ENCODE measurements at regions of chr16 and their contacts with region 1.

Region 1: GRCh38 chr16:89860747-89861304 is 12.6 kb upstream of the TCF25 start:
- DNase-seq: peak; percentile 85
- ATAC-seq: peak; percentile 94
- H3K4me3 Mint-ChIP-seq: no peak overlapping the region
- H3K27ac Mint-ChIP-seq: no peak overlapping the region
- H3K4me1 Mint-ChIP-seq: peaks cover 31% of the 10 kb centered on the region
- H3K27me3 Mint-ChIP-seq: no peaks in the 10 kb centered on the region
- CTCF ChIP-seq: peak; percentile 99

Region 2: DNA sequence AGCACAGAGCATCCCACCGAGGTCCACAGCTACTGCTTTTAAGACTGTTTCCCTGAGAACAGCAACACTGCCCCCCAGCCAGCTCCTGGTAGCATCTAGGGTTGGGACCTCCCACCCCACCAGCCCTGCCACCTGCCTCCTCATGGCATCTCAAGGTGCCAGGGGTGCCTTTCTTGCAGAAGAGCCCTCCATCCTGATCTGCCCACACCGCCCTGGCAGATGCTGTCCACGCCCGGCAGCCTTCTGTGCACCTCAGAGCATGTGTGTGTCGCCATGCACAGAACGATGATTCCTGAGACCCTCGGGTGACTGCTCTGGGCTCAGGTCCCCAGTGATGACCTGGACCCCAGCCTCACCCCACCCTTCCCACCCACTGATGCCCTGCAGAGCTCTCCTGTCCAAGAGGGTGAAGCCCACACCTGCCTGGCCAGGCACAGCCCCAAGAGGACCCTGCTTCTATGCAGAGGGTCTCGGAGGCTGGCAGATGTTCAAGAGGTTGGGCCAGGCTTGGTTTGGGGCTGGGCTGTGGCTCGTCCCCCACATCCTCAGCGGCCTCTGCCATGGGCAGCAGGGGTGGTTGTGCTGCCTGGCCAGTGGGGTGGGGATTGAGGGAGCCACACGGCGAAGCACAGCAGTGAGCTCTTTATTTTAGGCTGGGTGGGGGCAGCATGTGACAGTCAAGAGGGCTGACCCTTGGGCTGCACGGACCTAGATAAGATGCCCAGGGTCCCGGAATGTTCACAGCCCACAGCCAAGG is 154.1 kb before region 1 on chr16:
- CTCF ChIA-PET with region 1: interaction called, 46 read pairs
- POLR2A ChIA-PET with region 1: no interaction called
- intact Hi-C with region 1: no loop called
- DNase-seq: no peak
- ATAC-seq: no peak
- H3K4me3 Mint-ChIP-seq: no peak overlapping the region
- H3K27ac Mint-ChIP-seq: no peak overlapping the region
- H3K4me1 Mint-ChIP-seq: peaks cover 11% of the 10 kb centered on the region
- H3K27me3 Mint-ChIP-seq: no peaks in the 10 kb centered on the region
- CTCF ChIP-seq: no peak

Region 3: GRCh38 chr16:89761304-89761922 is 99.4 kb before region 1 on chr16:
- CTCF ChIA-PET with region 1: interaction called, 12 read pairs
- POLR2A ChIA-PET with region 1: no interaction called
- intact Hi-C with region 1: no loop called
- DNase-seq: no peak
- ATAC-seq: no peak
- H3K4me3 Mint-ChIP-seq: peak overlapping the region; percentile 70
- H3K27ac Mint-ChIP-seq: peak overlapping the region; percentile 81
- H3K4me1 Mint-ChIP-seq: peaks cover 30% of the 10 kb centered on the region
- H3K27me3 Mint-ChIP-seq: no peaks in the 10 kb centered on the region
- CTCF ChIP-seq: no peak

Region 4: DNA sequence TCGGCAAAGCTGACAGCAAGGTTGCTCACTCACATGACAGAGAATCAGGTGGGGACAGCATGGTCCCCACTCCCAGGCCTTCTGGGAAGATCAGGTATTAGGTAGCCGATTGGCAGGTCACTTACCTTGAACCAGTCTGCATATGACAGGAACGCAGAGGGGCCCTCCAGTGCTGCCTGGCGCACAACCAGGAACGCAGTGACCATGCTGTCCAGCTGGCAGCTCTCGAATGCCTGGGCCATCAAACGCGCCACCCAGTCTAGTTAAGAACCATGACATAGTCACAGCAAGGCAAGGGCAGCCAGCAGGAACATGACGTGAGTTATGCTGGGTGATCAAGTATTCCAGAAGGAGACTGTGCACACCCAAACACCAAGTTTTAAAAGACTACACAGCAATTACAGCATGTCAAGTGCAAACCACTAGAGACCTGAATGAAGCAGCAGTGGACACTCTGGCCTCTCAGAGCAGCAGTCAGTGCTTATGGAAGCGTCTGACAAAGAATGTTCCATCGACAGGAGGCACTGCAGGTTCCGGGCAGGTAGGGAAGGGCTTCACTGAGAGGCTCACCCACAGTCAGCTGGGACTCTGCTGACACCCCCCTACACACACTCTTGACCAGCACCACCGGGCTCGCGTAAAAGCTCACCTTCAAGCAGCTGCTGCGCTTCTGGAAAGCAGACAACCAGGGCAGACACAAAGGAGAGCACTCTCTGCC is 69.4 kb before region 1 on chr16:
- CTCF ChIA-PET with region 1: interaction called, 22 read pairs
- POLR2A ChIA-PET with region 1: no interaction called
- intact Hi-C with region 1: no loop called
- DNase-seq: no peak
- ATAC-seq: no peak
- H3K4me3 Mint-ChIP-seq: no peak overlapping the region
- H3K27ac Mint-ChIP-seq: no peak overlapping the region
- H3K4me1 Mint-ChIP-seq: peaks cover 12% of the 10 kb centered on the region
- H3K27me3 Mint-ChIP-seq: no peaks in the 10 kb centered on the region
- CTCF ChIP-seq: no peak

Region 5: GRCh38 chr16:89873972-89874689 is 13.3 kb after region 1 on chr16:
- CTCF ChIA-PET with region 1: interaction called, 34 read pairs
- POLR2A ChIA-PET with region 1: interaction called, 29 read pairs
- intact Hi-C with region 1: no loop called
- DNase-seq: peak; percentile 98
- ATAC-seq: peak; percentile 86
- H3K4me3 Mint-ChIP-seq: peak overlapping the region; percentile 81
- H3K27ac Mint-ChIP-seq: peak overlapping the region; percentile 97
- H3K4me1 Mint-ChIP-seq: peaks cover 16% of the 10 kb centered on the region
- H3K27me3 Mint-ChIP-seq: no peaks in the 10 kb centered on the region
- CTCF ChIP-seq: no peak